Posterior cingulate gyrus (tissue), 11 donors: ENCODE measurements at regions of chr5 and their contacts with region 1.

Region 1: DNA sequence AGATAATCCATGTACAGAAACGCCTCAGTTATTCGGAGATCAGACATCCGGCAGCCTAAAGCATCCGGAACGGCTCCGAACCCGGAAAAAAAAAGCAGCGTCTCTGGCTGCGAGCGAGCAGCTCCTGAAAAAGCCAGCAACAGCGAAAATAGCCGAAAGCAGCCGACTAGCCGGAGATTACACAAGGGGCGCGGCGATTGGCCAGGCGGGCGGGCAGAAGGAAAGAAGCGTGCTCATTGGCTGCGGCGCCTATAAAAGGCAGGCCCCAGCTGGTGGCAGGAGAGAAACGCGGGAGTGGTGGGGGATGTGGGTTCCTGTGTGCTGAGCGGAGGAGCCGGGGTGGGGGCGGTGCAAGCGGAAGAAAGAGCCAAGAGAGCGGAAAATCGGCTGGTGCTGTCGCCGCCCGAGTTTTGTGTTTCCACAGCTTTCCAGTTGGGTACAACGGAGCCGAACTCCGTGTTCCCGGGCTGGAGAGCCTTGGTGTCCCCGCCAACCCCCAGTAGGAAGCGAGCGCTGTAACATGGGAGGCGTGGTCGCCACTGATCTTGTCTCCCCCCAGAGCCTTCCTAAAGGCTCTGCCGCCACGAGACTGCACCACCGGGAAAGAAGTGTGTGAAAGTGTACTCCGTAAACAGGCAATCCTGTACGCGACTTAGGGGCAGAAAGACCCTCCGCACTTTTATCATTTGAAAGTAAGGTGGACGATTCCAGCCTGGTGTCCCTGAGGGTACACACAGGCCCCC is at the start of gene ARL15:
- DNase-seq: peak; percentile 97 to 100 (median 99)

Region 2: DNA sequence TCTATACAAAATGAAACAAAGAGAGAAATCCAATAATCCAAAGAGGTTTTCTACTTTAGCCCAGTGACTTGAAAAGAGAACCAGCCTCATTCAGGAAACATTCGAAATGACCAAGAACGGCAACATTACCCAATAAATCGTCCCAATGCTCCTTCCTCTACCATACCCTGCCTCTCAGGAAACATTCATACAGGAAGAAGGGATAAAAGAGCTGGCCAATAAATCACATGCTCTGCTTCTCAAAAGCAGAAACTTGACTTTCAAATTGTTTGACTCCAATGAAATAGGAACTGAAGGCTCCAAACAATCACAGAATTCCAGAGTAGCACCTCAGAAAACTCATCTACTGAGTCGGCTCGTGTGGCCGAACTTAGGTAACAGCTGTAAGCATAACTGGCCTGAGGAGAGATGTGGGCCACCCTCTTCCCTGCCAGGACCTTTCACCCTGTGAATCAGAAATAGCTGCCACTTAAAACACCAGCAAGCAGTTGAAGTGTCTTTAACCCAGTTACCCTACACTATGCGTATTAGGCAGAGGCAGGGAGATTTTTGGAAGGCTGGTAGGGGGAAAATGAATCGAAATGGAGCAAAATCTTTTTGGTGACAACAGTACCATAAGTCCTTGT is 14.8 kb before region 1 on chr5:
- intact Hi-C with region 1: no loop called
- DNase-seq: no peak

Region 3: DNA sequence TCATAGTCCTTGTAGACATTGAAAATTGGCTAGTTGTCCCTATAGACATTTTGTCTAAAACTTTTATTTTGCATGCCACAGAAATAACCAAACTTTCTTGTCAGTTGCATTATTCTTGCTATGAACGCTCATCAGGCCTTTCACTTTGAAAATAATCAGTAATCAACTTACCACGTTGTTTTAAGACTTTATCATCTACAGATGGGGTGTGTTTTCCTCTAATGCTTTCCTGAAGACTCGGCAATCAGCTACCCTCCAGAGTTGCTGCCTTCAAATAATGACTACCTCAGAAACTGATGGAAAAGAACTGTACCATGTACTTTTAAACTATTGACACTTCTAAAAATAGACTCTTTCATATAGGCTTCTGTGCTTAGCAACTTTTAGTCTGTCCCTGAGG is 111.4 kb after region 1 on chr5:
- intact Hi-C with region 1: loop called (anchors 10 kb)
- DNase-seq: no peak

Region 4: DNA sequence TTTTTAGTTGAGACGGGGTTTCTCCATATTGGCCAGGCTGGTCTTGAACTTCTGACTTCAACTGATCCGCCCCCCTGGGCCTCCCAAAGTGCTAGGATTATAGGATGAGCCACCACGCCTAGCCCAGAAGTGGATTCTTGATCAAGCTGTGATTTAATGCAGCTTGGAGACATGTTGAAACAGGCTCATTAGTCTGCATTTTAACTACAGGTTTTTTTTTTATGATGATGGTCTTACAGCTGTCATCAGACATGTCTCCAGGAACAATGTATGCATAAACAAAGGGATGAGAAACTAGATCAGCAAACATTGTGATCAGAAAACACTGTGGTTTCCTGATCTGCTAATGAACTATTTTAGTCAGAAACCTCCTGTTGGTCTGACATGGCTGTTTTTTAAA is 1254.1 kb after region 1 on chr5:
- intact Hi-C with region 1: no loop called
- DNase-seq: no peak